ENCODE measurements at regions of chr4 and their contacts with region 1.

Region 1: DNA sequence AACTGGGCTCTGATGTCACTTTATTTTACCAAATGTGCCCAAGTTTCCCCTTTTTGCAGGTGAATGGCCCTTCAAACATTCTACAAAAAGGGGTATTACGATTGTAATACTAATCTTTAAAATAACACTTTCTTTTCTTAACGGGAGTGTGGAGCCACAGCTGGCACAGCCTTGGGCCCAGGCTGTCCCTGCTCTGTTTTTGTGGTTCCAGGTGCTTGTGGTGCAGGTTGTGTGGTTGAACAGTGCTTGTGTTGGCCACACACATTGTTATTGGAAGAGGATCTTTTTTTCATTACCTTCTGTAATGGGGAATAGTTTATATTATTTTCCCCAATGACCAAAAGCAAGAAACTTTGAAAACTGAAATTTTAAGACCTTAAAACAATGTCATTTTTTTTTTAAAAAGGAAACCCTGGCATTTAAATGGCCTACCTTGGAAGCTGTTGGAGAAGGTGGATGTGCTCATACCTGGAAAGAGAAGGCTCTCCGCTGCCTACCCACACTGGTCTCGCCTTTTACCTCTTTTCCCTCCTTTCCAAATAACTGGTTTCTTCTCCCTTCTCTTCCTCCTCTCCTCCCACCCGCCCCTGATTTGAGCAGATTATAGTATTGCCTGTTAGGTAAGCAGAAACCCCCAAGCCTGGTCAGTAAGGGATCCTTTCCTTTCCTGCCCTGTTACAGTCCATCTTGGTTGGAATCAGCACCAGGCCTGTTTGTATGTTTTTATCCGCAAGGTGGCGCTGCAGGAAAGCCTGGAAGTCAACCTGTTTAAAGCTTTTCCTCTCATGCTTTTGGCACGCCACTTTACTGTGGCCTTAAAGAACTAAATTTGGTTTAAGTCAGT is 28.6 kb downstream of the HADH start:
- DNase-seq: peak; percentile 61 to 90 (median 81)
- ATAC-seq: peak; percentile 88
- H3K4me3 ChIP-seq: no peak overlapping the region
- H3K4me3 Mint-ChIP-seq: no peak overlapping the region
- H3K27ac ChIP-seq: no peak overlapping the region
- H3K27ac Mint-ChIP-seq: no peak overlapping the region
- H3K4me1 ChIP-seq: peaks cover 4% of the 10 kb centered on the region
- H3K4me1 Mint-ChIP-seq: peaks cover 15% of the 10 kb centered on the region
- H3K27me3 ChIP-seq: no peaks in the 10 kb centered on the region
- H3K27me3 Mint-ChIP-seq: no peaks in the 10 kb centered on the region
- CTCF ChIP-seq: peak; percentile 82

Region 2: GRCh38 chr4:107970063-107970798 is 48.0 kb before region 1 on chr4:
- CTCF ChIA-PET with region 1: no interaction called
- POLR2A ChIA-PET with region 1: no interaction called
- intact Hi-C with region 1: no loop called
- DNase-seq: no peak
- ATAC-seq: no peak
- H3K4me3 ChIP-seq: no peak overlapping the region
- H3K4me3 Mint-ChIP-seq: no peak overlapping the region
- H3K27ac ChIP-seq: no peak overlapping the region
- H3K27ac Mint-ChIP-seq: no peak overlapping the region
- H3K4me1 ChIP-seq: no peaks in the 10 kb centered on the region
- H3K4me1 Mint-ChIP-seq: peaks cover 3% of the 10 kb centered on the region
- H3K27me3 ChIP-seq: no peaks in the 10 kb centered on the region
- H3K27me3 Mint-ChIP-seq: peaks cover 4% of the 10 kb centered on the region
- CTCF ChIP-seq: no peak

Region 3: DNA sequence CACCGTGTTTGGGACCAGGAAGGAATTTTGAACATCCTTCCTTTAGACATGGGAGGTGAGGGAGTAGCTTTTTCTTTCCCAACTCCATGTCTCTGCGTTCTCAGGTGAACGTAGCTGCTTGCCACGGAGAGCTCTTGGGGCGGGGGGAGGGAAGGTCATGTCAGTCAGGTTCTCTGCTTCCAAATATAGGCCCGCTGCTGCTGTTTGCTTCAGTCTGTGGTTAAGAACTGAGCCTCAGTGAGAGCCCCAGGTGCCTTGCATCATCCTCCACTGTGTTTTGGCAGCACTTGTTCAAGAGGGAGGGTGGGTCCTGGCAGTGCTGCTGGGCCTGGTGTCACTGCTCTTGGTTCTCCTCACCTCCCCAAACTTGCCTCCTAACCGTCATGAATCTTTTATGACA is 18.0 kb after region 1 on chr4:
- CTCF ChIA-PET with region 1: interaction called, 64 read pairs
- POLR2A ChIA-PET with region 1: no interaction called
- intact Hi-C with region 1: no loop called
- DNase-seq: peak; percentile 37 to 89 (median 74)
- ATAC-seq: peak; percentile 96
- H3K4me3 ChIP-seq: peak overlapping the region in 1 of 2 experiments; percentile 29
- H3K4me3 Mint-ChIP-seq: peak overlapping the region; percentile 71
- H3K27ac ChIP-seq: peak overlapping the region; percentile 49 to 51
- H3K27ac Mint-ChIP-seq: peak overlapping the region; percentile 97
- H3K4me1 ChIP-seq: peaks cover 62% of the 10 kb centered on the region
- H3K4me1 Mint-ChIP-seq: peaks cover 57% of the 10 kb centered on the region
- H3K27me3 ChIP-seq: no peaks in the 10 kb centered on the region
- H3K27me3 Mint-ChIP-seq: no peaks in the 10 kb centered on the region
- CTCF ChIP-seq: no peak

Region 4: DNA sequence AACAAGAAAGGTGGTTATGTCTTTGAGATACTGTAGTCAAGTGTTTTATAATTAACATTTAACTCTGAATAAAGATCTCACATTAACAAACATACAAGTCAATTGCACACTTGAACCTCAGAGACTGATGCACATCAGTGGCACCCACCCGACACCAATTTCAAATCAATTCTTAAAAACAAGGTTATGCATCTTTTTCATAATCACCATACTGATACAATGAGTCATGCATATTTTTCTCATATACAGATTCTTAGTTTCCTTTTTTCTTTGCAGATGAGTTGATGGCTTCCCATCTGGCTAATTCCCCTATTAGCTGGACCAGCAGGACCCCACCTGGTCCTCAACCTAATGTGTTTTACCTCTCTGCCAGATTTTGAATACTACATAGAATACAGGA is 465.9 kb after region 1 on chr4:
- CTCF ChIA-PET with region 1: interaction called, 10 read pairs
- POLR2A ChIA-PET with region 1: no interaction called
- intact Hi-C with region 1: no loop called
- DNase-seq: no peak
- ATAC-seq: no peak
- H3K4me3 ChIP-seq: no peak overlapping the region
- H3K4me3 Mint-ChIP-seq: no peak overlapping the region
- H3K27ac ChIP-seq: no peak overlapping the region
- H3K27ac Mint-ChIP-seq: no peak overlapping the region
- H3K4me1 ChIP-seq: peaks cover 26% of the 10 kb centered on the region
- H3K4me1 Mint-ChIP-seq: peaks cover 38% of the 10 kb centered on the region
- H3K27me3 ChIP-seq: no peaks in the 10 kb centered on the region
- H3K27me3 Mint-ChIP-seq: no peaks in the 10 kb centered on the region
- CTCF ChIP-seq: no peak

Region 5: GRCh38 chr4:108512615-108513505 is 494.6 kb after region 1 on chr4:
- CTCF ChIA-PET with region 1: interaction called, 16 read pairs
- POLR2A ChIA-PET with region 1: no interaction called
- intact Hi-C with region 1: loop called in 1 of 2 experiments (anchors 1 kb)
- DNase-seq: peak in 8 of 9 experiments; percentile 18 to 71 (median 54)
- ATAC-seq: peak; percentile 93
- H3K4me3 ChIP-seq: peak overlapping the region in 1 of 2 experiments; percentile 17
- H3K4me3 Mint-ChIP-seq: peak overlapping the region; percentile 82
- H3K27ac ChIP-seq: no peak overlapping the region
- H3K27ac Mint-ChIP-seq: peak overlapping the region; percentile 57
- H3K4me1 ChIP-seq: peaks cover 16% of the 10 kb centered on the region
- H3K4me1 Mint-ChIP-seq: peaks cover 29% of the 10 kb centered on the region
- H3K27me3 ChIP-seq: no peaks in the 10 kb centered on the region
- H3K27me3 Mint-ChIP-seq: no peaks in the 10 kb centered on the region
- CTCF ChIP-seq: peak; percentile 53

Region 6: GRCh38 chr4:108620101-108620932 is 602.1 kb after region 1 on chr4 and contains the start of gene RPL34:
- CTCF ChIA-PET with region 1: interaction called, 6 read pairs
- POLR2A ChIA-PET with region 1: no interaction called
- intact Hi-C with region 1: loop called in 1 of 2 experiments (anchors 1 kb)
- DNase-seq: peak; percentile 94 to 100 (median 97)
- ATAC-seq: peak; percentile 98
- H3K4me3 ChIP-seq: peak within 1 kb of the TSS; percentile 92 to 97
- H3K4me3 Mint-ChIP-seq: peak within 1 kb of the TSS; percentile 93
- H3K27ac ChIP-seq: peak within 1 kb of the TSS; percentile 85 to 90
- H3K27ac Mint-ChIP-seq: peak within 1 kb of the TSS; percentile 96
- H3K4me1 ChIP-seq: peaks cover 50% of the 10 kb centered on the region
- H3K4me1 Mint-ChIP-seq: peaks cover 58% of the 10 kb centered on the region
- H3K27me3 ChIP-seq: no peaks in the 10 kb centered on the region
- H3K27me3 Mint-ChIP-seq: no peaks in the 10 kb centered on the region
- CTCF ChIP-seq: no peak
- total RNA-seq, gene RPL34: 3,253 to 3,442 TPM

Region 7: GRCh38 chr4:108783665-108784463 is 765.6 kb after region 1 on chr4:
- CTCF ChIA-PET with region 1: no interaction called
- POLR2A ChIA-PET with region 1: no interaction called
- intact Hi-C with region 1: loop called in 1 of 2 experiments (anchors 5 kb)
- DNase-seq: peak in 1 of 9 experiments; percentile 16
- ATAC-seq: no peak
- H3K4me3 ChIP-seq: no peak overlapping the region
- H3K4me3 Mint-ChIP-seq: no peak overlapping the region
- H3K27ac ChIP-seq: no peak overlapping the region
- H3K27ac Mint-ChIP-seq: no peak overlapping the region
- H3K4me1 ChIP-seq: no peaks in the 10 kb centered on the region
- H3K4me1 Mint-ChIP-seq: no peaks in the 10 kb centered on the region
- H3K27me3 ChIP-seq: no peaks in the 10 kb centered on the region
- H3K27me3 Mint-ChIP-seq: no peaks in the 10 kb centered on the region
- CTCF ChIP-seq: no peak

Measured in CD8-positive, alpha-beta T cell (primary cell).